Activated naive CD4-positive, alpha-beta T cell treated with anti-CD3 and anti-CD28 coated beads for 36 hours (primary cell): ENCODE measurements at regions of chr5 and their contacts with region 1.

Region 1: GRCh38 chr5:173331956-173332479 is 3.8 kb upstream of the STC2 start:
- DNase-seq: peak; percentile 95
- H3K4me3 Mint-ChIP-seq: no peak overlapping the region
- H3K27ac Mint-ChIP-seq: no peak overlapping the region
- H3K4me1 Mint-ChIP-seq: peaks cover 20% of the 10 kb centered on the region
- H3K27me3 Mint-ChIP-seq: peaks cover 37% of the 10 kb centered on the region

Region 2: DNA sequence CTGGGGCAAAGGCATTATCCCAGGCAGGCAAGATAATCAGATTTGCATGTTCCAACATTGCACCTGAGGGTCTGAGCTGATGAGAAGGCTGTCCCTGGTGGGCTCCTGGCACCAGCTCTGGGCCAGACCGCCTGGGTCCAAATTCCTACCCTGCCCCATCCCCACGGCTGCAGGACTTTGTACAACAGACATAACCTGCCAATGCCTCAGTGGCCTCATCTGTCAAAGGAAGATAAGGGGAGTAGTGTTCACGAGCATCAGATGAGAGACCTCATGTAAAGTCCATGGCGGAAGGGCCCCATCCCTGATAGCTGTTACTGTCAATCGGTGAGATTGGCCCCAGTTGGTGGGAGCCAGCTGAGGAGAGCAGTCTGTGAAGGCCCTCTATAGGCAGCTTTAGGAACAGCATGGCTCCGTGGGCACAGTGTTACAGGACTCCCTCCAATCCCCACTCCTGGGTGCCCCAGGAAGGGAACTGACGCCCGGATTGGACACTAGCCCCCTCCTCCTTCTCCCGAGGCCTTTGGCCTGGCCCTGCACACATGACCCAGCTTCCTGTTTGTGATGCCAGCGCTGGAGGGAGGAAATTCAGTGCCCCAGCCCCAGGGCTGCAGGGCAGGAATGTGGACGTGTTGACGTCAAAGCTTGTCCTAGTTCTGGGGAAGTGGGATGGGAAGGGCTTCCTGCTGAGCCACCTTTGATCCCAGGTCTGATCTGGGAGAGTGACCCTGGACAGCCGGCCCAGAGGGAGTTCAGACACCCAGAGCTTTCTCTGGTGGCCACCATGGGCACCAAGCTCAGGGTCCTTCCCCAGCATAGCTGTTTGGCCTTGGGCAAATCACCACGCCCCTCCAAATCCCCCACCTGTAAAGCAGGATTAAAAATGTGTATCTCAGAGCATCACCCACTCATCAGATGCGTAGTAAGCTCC is 617.3 kb before region 1 on chr5:
- CTCF ChIA-PET with region 1: no interaction called
- intact Hi-C with region 1: loop called (anchors 2 kb)
- DNase-seq: peak; percentile 75
- H3K4me3 Mint-ChIP-seq: no peak overlapping the region
- H3K27ac Mint-ChIP-seq: no peak overlapping the region
- H3K4me1 Mint-ChIP-seq: no peaks in the 10 kb centered on the region
- H3K27me3 Mint-ChIP-seq: peaks cover 5% of the 10 kb centered on the region

Region 3: DNA sequence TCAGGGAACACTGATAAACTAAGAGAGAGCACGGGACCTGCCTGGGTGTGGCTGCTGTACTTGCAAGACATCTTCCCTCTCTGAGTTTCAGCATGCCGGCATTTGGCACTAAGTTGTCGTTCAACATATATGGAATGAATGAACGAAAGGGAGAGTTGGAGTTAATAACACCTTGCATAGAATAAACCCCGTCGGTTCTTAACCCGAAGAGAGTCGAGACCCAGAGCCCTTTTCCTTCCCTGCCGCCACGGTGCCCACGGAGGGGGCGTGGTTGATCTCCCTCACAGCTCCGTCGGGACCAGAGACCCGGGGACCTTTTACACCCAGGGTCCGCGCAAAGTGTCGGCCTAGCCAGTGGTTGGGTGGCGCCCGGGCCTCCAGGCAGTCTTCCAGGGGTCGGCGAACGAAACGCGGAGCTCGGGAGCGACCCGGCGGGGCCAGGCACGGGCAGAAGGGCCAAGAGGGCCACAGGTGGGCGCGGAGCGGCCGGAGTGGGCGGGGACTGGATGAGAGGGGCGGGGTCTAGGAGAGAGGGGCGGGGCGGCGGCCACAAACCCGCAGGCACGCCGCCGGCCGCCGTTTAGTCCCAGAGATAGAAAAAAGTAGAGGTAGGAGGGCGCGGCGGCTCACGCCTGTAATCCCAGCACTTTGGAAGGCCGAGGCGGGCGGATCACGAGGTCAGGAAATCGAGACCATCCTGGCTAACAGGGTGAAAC is 373.5 kb before region 1 on chr5:
- CTCF ChIA-PET with region 1: no interaction called
- intact Hi-C with region 1: loop called (anchors 1 kb)
- DNase-seq: peak; percentile 60
- H3K4me3 Mint-ChIP-seq: peak overlapping the region; percentile 93
- H3K27ac Mint-ChIP-seq: peak overlapping the region; percentile 86
- H3K4me1 Mint-ChIP-seq: peaks cover 16% of the 10 kb centered on the region
- H3K27me3 Mint-ChIP-seq: no peaks in the 10 kb centered on the region

Region 4: GRCh38 chr5:173144200-173145176 is 187.5 kb before region 1 on chr5 and contains the start of gene BNIP1:
- CTCF ChIA-PET with region 1: interaction called, 3 read pairs
- intact Hi-C with region 1: loop called (anchors 1 kb)
- DNase-seq: peak; percentile 99
- H3K4me3 Mint-ChIP-seq: peak within 1 kb of the TSS; percentile 97
- H3K27ac Mint-ChIP-seq: peak within 1 kb of the TSS; percentile 92
- H3K4me1 Mint-ChIP-seq: peaks cover 14% of the 10 kb centered on the region
- H3K27me3 Mint-ChIP-seq: no peaks in the 10 kb centered on the region
- total RNA-seq, gene BNIP1: 29.4 to 30.4 TPM

Region 5: GRCh38 chr5:173293817-173294672 is 38.0 kb before region 1 on chr5:
- CTCF ChIA-PET with region 1: interaction called, 144 read pairs
- intact Hi-C with region 1: loop called (anchors 1 kb)
- DNase-seq: peak; percentile 84
- H3K4me3 Mint-ChIP-seq: no peak overlapping the region
- H3K27ac Mint-ChIP-seq: no peak overlapping the region
- H3K4me1 Mint-ChIP-seq: peaks cover 11% of the 10 kb centered on the region
- H3K27me3 Mint-ChIP-seq: peaks cover 40% of the 10 kb centered on the region

Region 6: DNA sequence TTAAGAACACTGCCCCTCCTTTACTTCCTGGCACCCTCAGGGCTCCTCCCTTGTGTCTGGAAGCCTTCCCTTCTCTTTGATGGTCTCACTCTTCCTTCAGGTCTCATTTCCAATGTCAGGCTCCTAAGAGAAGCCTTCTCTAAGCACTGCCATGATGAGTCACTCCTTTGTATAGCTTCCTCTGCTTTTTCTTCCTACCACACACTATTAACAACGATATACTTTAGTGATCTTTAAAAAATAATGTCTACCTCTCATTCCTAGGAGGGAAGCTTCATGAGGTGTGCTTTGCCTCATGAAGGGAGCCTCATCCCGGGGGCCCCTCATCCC is 204.3 kb after region 1 on chr5:
- CTCF ChIA-PET with region 1: no interaction called
- intact Hi-C with region 1: no loop called
- DNase-seq: no peak
- H3K4me3 Mint-ChIP-seq: no peak overlapping the region
- H3K27ac Mint-ChIP-seq: no peak overlapping the region
- H3K4me1 Mint-ChIP-seq: no peaks in the 10 kb centered on the region
- H3K27me3 Mint-ChIP-seq: peaks cover 9% of the 10 kb centered on the region

Region 7: DNA sequence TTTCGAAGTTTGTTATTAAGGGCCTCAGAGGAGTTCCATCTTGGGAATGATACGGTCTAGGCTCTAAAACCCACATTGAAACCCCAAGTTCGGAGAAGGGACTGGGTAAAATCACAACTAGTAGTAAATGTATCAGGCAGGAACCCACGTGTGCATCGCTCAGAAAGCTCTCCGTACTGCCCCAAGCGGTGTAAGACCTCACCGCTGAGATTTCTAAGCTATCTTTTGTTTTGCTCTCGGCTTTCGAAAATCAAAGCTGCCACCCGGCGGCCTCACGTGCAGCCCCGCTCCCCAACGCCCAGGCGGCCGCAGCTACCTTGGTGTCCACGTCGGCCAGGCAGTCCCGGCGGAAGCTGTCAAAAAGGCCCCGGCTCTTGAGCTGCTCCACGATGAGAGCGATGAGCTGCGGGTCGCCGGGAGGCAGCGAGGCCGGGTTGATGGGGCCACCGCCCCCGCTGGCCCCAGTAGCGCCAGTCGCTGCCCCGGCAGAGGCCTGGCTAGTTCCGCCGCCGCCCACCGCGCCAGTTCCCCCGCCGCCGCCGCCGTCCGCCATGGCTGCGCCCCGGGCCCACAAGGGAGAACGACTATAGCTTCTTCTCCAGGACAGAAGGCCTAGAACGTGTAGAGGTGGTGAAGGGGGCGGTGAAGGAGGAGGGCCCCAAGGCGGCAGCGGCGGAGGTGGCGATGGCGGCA is 284.0 kb after region 1 on chr5:
- CTCF ChIA-PET with region 1: no interaction called
- intact Hi-C with region 1: loop called (anchors 2 kb)
- DNase-seq: peak; percentile 83
- H3K4me3 Mint-ChIP-seq: peak overlapping the region; percentile 95
- H3K27ac Mint-ChIP-seq: peak overlapping the region; percentile 93
- H3K4me1 Mint-ChIP-seq: peaks cover 48% of the 10 kb centered on the region
- H3K27me3 Mint-ChIP-seq: no peaks in the 10 kb centered on the region